ENCODE measurements at regions of chr16 and their contacts with region 1.

Region 1: GRCh38 chr16:16033208-16033717 is 83.8 kb downstream of the ABCC1 start:
- DNase-seq: peak; percentile 39
- CTCF ChIP-seq: no peak

Region 2: GRCh38 chr16:15949210-15950160 is 83.8 kb before region 1 on chr16 and contains the start of gene ABCC1:
- CTCF ChIA-PET with region 1: no interaction called
- POLR2A ChIA-PET with region 1: no interaction called
- DNase-seq: peak; percentile 87
- CTCF ChIP-seq: no peak

Region 3: DNA sequence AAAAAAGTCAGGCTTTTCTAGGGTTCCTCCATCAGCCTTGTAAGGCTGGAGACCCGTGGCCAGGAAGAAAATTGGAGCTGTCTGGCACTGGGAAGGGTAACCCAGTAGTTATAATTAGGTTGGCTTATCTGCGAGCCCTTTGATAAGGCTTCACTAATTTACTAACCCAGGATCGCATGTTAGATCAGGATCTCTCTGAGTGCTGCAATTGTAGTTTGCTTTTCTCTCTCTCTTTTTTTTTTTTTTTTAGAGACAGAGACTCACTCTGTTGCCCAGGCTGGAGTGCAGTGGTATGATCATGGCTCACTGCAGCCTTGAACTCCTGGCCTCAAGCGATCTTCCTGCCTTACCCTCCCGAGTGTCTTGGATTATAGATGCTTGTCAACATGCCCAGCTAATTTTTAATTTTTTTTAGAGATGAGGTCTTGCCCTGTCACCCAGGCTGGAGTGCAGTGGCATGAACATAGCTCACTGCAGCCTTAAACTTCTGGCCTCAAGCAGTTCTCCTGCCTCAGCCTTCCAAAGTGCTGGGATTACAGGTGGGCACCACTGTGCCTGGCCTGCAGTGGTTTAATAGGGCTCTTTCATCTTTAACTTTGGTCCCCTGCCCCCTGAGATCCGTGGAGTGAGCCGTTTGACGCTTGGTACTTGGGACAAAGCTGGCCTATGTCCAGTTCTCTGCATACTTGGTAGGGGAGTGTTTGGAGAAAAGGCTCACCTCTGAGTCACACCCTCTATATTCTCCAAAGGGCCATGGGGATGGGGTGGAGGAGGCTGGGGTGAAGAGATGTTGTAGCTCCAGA is 66.6 kb before region 1 on chr16:
- CTCF ChIA-PET with region 1: no interaction called
- POLR2A ChIA-PET with region 1: no interaction called
- DNase-seq: no peak
- CTCF ChIP-seq: no peak

Region 4: DNA sequence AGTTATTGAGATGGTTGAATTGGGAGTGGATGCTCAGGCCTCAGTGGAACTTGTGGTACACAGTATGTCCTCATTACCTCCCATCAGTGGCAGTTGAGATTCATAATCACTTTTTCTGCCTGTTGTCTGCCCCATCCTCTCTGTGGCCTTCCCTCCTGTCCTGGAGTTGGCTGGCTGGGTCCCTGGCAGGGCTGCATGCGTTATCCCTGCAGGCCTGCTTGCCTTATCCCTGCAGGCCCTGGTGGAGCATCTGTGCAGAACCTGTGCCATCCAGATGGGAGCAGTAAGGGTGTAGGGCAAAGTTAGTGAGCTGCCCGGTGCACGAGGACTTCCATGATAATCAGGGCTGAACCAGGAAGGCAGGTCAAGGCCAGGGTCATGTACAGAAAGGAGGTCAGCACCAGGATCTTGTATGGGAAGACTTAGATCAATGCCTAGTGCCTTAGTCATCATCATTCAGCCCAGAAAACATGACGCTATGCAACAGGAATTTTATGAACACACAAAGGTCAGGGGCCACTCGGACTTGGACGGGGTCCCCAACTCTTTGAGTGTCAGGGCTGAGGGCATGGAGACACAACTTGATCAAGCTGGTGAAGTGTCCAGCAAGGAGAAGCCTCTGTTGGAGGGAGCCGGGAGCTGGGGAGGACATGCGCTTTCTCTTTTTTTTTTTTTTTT is 36.7 kb before region 1 on chr16:
- CTCF ChIA-PET with region 1: no interaction called
- POLR2A ChIA-PET with region 1: no interaction called
- DNase-seq: no peak
- CTCF ChIP-seq: no peak

Region 5: DNA sequence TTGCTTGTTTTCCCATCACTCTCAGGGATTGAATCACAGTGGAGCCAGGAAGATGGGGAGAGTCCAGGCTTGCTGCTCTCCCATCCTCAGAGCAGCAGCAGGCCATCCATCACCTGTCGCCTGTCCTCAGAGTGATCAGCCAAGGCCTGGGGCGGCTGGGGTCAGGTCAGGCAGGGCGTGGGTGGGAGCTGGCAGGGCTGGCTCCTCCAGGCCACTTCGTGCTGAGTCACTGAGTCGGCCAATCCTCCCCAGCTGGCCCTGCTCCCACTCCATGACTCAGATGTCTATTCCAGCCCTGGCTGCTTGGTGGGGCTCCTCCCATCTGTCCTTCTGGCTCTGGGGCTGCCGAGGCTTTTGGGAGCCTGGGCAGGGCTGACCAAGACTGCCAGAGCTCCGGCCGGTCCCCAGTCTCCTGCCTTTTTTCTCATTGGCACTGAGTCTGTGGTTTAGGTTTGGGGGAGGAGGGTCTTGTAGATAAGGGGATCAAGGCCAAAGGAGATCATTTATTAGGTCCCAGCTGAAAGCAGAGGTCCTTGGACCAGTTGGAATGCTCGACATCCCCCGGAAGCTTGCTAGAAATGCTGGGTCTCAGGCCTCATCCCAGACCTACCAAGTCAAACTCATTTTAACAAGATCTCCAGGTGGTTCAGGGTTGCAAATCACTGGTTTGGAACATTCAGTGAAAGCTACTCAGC is 11.1 kb before region 1 on chr16:
- CTCF ChIA-PET with region 1: interaction called, 14 read pairs
- POLR2A ChIA-PET with region 1: no interaction called
- DNase-seq: no peak
- CTCF ChIP-seq: no peak

Measured in GM10248 (cell line).